MCF 10A (cell line): ENCODE measurements at regions of chr13 and their contacts with region 1.

Region 1: DNA sequence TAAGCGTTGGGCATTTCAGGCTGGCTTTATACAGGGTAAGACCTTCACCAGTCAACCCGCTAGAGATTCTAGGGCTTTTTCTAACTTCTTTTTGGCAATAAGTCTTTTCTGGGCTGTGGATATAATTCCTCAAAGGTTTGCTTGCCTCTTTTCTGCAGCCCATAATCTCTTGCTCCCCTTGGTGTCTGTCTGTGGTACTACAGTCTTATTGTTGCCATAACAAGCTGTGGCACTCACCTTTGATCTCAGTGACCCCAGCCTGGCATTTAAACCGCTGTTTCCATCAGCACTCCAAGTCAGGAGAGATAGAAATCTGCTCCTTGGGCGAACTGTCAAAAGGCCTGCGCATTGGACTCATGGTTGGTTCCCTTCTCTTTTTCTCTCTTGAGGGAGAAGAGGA is 14.5 kb upstream of the MPHOSPH8 start:
- DNase-seq: peak; percentile 53
- H3K4me3 Mint-ChIP-seq: no peak overlapping the region
- H3K27ac Mint-ChIP-seq: no peak overlapping the region
- H3K4me1 Mint-ChIP-seq: no peaks in the 10 kb centered on the region
- H3K27me3 Mint-ChIP-seq: no peaks in the 10 kb centered on the region
- CTCF ChIP-seq: peak; percentile 61

Region 2: DNA sequence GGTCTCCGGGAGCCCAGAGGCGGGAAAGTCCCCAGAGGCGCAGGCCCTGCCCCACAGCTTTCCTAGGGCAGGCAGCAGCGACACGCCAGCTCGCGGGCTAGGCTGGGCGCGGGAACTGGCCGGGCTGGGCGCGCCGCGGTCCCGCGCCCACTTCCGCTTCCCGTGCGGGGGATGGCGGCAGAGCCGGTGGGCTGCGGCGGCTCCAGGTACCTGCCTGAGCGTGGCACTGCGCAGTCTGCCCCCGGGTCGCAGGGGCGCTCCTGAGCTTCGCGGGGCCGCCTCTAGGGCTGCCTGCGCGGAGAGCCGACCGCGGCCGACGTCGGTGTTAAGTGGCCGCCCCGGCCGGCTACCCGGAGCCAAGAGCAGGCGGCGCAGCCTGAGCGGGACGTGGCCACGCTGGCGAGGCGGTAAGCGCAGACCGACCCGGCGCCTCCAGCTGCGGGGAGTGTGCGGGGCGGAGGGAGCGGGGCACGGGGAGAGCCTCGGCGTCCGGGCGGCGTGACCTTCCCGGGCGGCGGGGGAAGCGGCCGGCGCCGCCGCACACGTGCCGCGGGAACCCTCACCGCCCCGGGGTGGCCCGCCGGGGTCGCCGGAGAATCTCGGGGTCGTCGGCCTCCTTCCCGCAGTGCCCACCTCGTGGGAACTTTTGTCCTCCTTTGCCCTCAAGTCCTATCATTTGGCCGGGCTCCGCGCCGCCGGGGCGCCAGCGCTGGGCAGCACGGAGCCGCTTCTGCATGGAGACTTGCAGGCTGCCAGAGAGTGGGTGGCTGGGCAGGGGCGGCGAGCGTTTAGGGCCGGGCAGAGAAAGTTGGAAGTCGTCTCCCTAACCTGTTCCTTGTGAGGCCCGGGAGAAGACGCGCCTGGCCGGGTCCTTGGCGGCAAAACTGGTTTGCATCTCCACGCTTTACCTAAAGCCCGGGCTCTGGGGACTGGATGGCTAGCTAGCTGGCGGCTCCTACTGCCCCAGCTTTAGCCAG is 16.9 kb before region 1 on chr13:
- CTCF ChIA-PET with region 1: interaction called, 11 read pairs
- POLR2A ChIA-PET with region 1: no interaction called
- intact Hi-C with region 1: no loop called
- DNase-seq: peak; percentile 46
- H3K4me3 Mint-ChIP-seq: peak overlapping the region; percentile 69
- H3K27ac Mint-ChIP-seq: no peak overlapping the region
- H3K4me1 Mint-ChIP-seq: peaks cover 12% of the 10 kb centered on the region
- H3K27me3 Mint-ChIP-seq: no peaks in the 10 kb centered on the region
- CTCF ChIP-seq: no peak

Region 3: GRCh38 chr13:19633479-19634255 is 14.7 kb after region 1 on chr13 and contains the start of gene MPHOSPH8:
- CTCF ChIA-PET with region 1: interaction called, 10 read pairs
- POLR2A ChIA-PET with region 1: interaction called, 15 read pairs
- intact Hi-C with region 1: no loop called
- DNase-seq: peak; percentile 94
- H3K4me3 Mint-ChIP-seq: peak within 1 kb of the TSS; percentile 100
- H3K27ac Mint-ChIP-seq: peak within 1 kb of the TSS; percentile 99
- H3K4me1 Mint-ChIP-seq: no peaks in the 10 kb centered on the region
- H3K27me3 Mint-ChIP-seq: no peaks in the 10 kb centered on the region
- CTCF ChIP-seq: no peak
- total RNA-seq, gene MPHOSPH8: 31.9 and 32.4 TPM in 2 replicates

Region 4: GRCh38 chr13:19818210-19818842 is 199.4 kb after region 1 on chr13:
- CTCF ChIA-PET with region 1: no interaction called
- POLR2A ChIA-PET with region 1: no interaction called
- intact Hi-C with region 1: no loop called
- DNase-seq: no peak
- H3K4me3 Mint-ChIP-seq: no peak overlapping the region
- H3K27ac Mint-ChIP-seq: no peak overlapping the region
- H3K4me1 Mint-ChIP-seq: no peaks in the 10 kb centered on the region
- H3K27me3 Mint-ChIP-seq: no peaks in the 10 kb centered on the region
- CTCF ChIP-seq: peak; percentile 27